ENCODE measurements at regions of chr3 and their contacts with region 1.

Region 1: DNA sequence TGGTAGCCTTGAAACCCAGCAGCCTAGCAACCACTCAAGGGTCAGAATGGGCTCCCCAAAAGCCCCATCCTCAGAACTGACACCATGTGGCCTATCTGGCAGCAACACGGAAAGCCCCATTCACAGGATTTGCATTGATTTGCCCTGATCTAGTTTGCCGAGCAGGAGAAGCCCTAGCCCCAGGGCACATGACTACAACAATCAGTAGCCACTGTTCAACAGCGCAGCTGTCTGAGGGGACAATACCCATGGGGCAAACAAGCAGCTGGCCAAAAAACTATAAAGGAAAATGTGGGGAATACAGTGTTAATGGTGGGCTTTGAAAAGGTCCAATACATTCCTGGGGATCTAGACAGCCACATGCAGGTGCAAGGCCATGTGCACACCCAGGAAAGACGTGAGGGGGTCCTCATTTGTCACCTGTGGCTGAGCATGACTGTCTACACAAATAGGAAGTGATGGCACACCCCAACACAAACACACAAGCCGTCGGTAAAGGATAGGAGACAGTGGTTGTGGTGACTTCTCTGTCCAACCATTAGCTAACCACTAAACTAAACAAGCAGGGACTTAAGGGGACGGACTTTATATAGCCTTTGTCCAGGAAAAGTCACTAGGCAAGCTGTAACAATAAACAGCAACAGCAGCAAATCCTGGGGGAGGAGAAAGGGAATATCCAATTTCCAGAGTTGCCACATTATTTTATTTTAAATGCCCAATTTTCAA is 113.7 kb downstream of the LRIG1 start:
- DNase-seq: peak; percentile 61
- CTCF ChIP-seq: no peak

Region 2: DNA sequence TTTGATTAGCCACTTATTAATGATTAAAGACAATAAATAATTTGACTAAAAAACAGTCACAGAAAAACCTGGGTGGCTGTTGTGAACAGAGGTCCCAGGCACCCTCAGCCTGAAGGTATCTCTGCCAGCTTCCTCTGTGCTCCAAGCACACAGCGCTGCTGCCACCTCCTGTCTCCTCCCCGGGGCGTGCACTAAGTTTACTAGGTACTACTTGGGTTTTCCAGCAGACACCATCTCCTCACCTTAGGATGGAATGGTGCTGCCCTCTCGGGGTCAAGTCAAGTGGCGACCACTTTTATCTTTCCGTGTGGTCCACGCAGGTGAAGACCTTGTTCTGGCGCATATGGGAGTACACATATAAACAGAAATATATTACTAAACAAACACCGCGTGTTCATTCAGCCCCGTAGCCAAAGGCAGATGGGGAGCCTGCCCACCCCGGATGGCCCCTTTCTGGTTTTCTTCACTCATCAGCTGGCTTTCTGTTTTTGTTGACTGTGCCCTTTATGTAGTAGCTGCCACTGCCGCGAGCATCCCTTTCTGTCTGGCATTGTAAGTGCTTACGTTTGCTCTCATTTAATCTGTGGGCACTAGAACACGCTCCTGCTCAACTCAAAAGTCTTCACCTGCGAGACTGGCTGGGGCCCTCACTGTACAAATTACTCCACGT is 14.3 kb before region 1 on chr3:
- CTCF ChIA-PET with region 1: interaction called, 19 read pairs
- POLR2A ChIA-PET with region 1: no interaction called
- DNase-seq: no peak
- CTCF ChIP-seq: peak; percentile 27